ENCODE measurements at regions of chr20 and their contacts with region 1.

Region 1: DNA sequence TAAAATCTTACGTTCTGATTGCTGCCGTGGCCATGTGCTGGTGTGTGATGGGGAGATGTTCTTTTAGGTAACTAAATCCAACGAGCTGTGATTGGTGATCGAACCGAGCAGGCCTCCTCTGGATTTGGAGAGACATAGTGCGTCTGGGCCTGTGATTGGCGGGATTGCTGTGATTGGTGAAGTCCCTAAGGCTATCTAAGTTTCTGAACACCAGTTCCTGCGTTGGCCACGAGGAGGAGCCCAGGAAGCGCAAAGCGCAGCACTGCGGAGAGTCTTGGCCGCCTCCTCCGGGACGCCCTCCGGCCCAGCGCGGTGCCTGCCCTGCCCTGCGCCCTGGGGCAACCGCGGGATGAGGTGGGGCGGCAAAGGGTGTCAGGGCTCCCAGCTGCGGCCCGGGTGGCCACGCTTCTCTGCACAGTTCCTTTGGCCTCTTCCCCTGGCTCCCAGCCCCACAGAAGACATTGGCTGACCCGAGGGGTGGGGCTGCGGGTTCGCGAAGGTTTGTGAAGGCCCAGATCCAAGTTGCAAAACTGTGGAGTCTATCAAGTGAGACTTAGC is 33.0 kb downstream of the HNF4A start:
- DNase-seq: peak; percentile 63
- ATAC-seq: peak; percentile 69
- H3K4me3 ChIP-seq: no peak overlapping the region
- H3K4me3 Mint-ChIP-seq: no peak overlapping the region
- H3K27ac ChIP-seq: no peak overlapping the region
- H3K27ac Mint-ChIP-seq: no peak overlapping the region
- H3K4me1 ChIP-seq: peaks cover 3 to 9% of the 10 kb centered on the region in 2 donors
- H3K4me1 Mint-ChIP-seq: peaks cover 5% of the 10 kb centered on the region
- H3K27me3 ChIP-seq: peaks cover 0 to 15% (median 5%) of the 10 kb centered on the region in 4 experiments
- H3K27me3 Mint-ChIP-seq: peaks cover 30% of the 10 kb centered on the region
- CTCF ChIP-seq: peak; percentile 74

Region 2: GRCh38 chr20:44370639-44371220 is 17.8 kb before region 1 on chr20:
- CTCF ChIA-PET with region 1: interaction called, 13 read pairs
- POLR2A ChIA-PET with region 1: no interaction called
- intact Hi-C with region 1: no loop called
- DNase-seq: no peak
- ATAC-seq: no peak
- H3K4me3 ChIP-seq: no peak overlapping the region
- H3K4me3 Mint-ChIP-seq: no peak overlapping the region
- H3K27ac ChIP-seq: no peak overlapping the region
- H3K27ac Mint-ChIP-seq: no peak overlapping the region
- H3K4me1 ChIP-seq: no peaks in the 10 kb centered on the region
- H3K4me1 Mint-ChIP-seq: no peaks in the 10 kb centered on the region
- H3K27me3 ChIP-seq: peaks cover 0 to 5% (median 1%) of the 10 kb centered on the region in 4 experiments
- H3K27me3 Mint-ChIP-seq: peaks cover 16% of the 10 kb centered on the region
- CTCF ChIP-seq: no peak

Region 3: GRCh38 chr20:44733341-44734069 is 345.0 kb after region 1 on chr20:
- CTCF ChIA-PET with region 1: interaction called, 11 read pairs
- POLR2A ChIA-PET with region 1: no interaction called
- intact Hi-C with region 1: no loop called
- DNase-seq: peak; percentile 61
- ATAC-seq: peak; percentile 78
- H3K4me3 ChIP-seq: no peak overlapping the region
- H3K4me3 Mint-ChIP-seq: no peak overlapping the region
- H3K27ac ChIP-seq: no peak overlapping the region
- H3K27ac Mint-ChIP-seq: no peak overlapping the region
- H3K4me1 ChIP-seq: no peaks in the 10 kb centered on the region
- H3K4me1 Mint-ChIP-seq: peaks cover 9% of the 10 kb centered on the region
- H3K27me3 ChIP-seq: no peaks in the 10 kb centered on the region
- H3K27me3 Mint-ChIP-seq: no peaks in the 10 kb centered on the region
- CTCF ChIP-seq: peak; percentile 73

Measured in B cell (primary cell).